Body of pancreas (tissue), 4 donors: ENCODE measurements at regions of chr16 and their contacts with region 1.

Region 1: DNA sequence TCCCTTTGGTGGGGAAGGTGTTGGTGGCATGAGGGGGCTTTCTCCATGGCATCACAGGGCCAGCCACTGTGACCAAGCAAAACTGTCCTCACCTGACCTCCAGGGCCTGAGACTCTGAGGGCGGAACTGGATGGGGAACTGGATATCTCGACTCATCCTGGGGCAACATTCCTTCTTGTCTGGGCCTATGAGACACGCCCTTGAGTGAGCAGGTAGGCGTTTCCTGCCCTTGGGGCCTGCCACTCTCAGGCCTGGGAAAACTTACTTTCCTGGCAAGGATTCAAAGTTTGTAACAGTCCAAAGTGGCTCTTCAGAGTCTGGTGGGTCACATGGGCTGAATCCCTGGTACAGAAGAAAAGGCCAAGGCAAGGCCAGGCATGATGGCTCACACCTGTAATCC is 9.6 kb downstream of the MT1X start:
- DNase-seq: peak; percentile 57 to 78 (median 72)
- ATAC-seq: peak; percentile 77
- H3K4me3 ChIP-seq: no peak overlapping the region
- H3K27ac ChIP-seq: peak overlapping the region in 1 of 4 donors; percentile 54
- H3K4me1 ChIP-seq: peaks cover 35% of the 10 kb centered on the region
- H3K27me3 ChIP-seq: no peaks in the 10 kb centered on the region
- CTCF ChIP-seq: no peak
- POLR2A ChIP-seq: no peak

Region 2: DNA sequence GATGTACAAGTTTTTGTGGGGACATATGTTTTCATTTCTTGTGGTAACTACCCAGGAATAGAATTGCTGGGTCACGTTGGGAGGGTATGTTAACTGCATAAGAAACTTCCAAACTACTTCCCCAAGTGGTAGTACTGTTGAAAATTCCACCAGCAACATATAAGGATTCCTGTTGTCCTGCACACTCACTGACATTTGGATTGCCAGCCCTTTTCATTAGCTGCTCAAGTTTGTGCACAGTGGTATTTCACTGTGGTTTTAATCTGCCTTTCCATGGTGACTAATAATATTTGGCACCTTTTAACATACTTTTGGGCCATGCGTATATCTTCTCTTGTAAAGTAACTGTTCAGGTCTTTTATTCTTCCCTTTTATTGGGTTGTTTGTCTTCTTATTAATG is 397.3 kb before region 1 on chr16:
- intact Hi-C with region 1: no loop called
- DNase-seq: no peak
- ATAC-seq: no peak
- H3K4me3 ChIP-seq: no peak overlapping the region
- H3K27ac ChIP-seq: no peak overlapping the region
- H3K4me1 ChIP-seq: no peaks in the 10 kb centered on the region
- H3K27me3 ChIP-seq: no peaks in the 10 kb centered on the region
- CTCF ChIP-seq: no peak
- POLR2A ChIP-seq: no peak

Region 3: GRCh38 chr16:56608043-56608875 is 83.6 kb before region 1 on chr16 and contains the start of gene MT2A:
- intact Hi-C with region 1: loop called (anchors 10 kb)
- DNase-seq: peak; percentile 95 to 98 (median 96)
- ATAC-seq: peak; percentile 91
- H3K4me3 ChIP-seq: peak within 1 kb of the TSS; percentile 10 to 46
- H3K27ac ChIP-seq: peak within 1 kb of the TSS; percentile 91 to 97 (median 92)
- H3K4me1 ChIP-seq: peaks cover 46% of the 10 kb centered on the region
- H3K27me3 ChIP-seq: no peaks in the 10 kb centered on the region
- CTCF ChIP-seq: no peak
- POLR2A ChIP-seq: peak; percentile 85 to 94 (median 93)
- total RNA-seq, gene MT2A: 20.0 to 211 TPM